ENCODE measurements at regions of chr11 and their contacts with region 1.

Region 1: GRCh38 chr11:62427630-62428233 is 8.9 kb downstream of the SCGB1A1 start:
- H3K4me3 ChIP-seq: no peak overlapping the region
- H3K27ac ChIP-seq: no peak overlapping the region
- H3K4me1 ChIP-seq: no peaks in the 10 kb centered on the region; the same call in 1 of the 2 replicates
- CTCF ChIP-seq: no peak

Region 2: GRCh38 chr11:62394825-62395538 is 32.8 kb before region 1 on chr11:
- CTCF ChIA-PET with region 1: interaction called, 36 read pairs
- POLR2A ChIA-PET with region 1: interaction called, 4 read pairs
- H3K4me3 ChIP-seq: no peak overlapping the region
- H3K27ac ChIP-seq: no peak overlapping the region
- H3K4me1 ChIP-seq: no peaks in the 10 kb centered on the region
- CTCF ChIP-seq: no peak

Region 3: DNA sequence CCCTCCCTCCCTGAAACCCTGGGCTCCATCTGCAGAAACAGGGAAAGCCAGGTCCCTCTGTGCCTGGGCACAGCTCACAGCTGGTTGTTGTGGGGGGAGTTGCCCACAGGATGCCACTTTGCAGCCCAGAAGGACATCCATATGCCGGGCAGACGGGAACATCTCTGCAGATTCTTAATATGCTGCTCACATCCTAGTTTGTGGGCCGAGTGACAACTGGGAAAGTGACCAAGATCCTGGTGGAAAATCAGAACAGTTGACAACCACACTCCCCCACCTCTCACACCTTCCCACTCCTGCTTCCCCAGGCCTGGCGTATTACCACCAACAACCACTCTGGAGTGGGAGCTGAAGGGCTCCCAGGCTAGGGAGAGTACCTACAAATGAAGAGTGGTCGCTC is 16.2 kb before region 1 on chr11:
- CTCF ChIA-PET with region 1: interaction called, 13 read pairs
- POLR2A ChIA-PET with region 1: no interaction called
- H3K4me3 ChIP-seq: no peak overlapping the region
- H3K27ac ChIP-seq: no peak overlapping the region
- H3K4me1 ChIP-seq: no peaks in the 10 kb centered on the region
- CTCF ChIP-seq: no peak

Region 4: DNA sequence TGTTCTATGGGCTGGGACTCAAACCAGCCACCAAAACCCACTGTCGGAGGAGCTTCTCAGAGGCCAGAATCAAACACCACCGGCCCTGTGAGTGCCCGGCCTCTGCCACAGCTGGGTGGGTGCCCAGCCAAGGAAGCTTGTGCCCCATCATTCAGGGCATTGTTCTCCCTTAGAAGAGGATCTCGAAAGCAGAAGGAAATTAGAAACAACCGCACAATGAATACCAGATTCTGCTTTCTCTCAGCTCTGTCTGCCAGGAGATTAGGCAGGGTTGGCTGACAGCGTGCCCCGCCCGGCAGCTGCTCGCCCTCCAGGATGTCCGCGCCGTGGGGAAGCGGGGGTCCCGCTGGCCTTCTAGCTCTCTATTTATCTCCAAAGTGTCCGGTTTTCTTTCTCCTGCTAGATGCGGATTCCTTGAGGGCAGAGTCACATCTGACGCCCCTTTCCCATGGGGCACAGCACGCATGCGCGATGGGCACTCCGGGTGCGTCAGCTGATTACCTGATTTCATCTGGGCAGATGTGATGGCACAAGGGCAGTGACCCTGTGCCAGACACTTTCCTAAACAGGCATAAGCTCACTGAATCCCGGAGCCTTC is 16.6 kb after region 1 on chr11:
- CTCF ChIA-PET with region 1: interaction called, 20 read pairs
- POLR2A ChIA-PET with region 1: interaction called, 3 read pairs
- H3K4me3 ChIP-seq: no peak overlapping the region
- H3K27ac ChIP-seq: no peak overlapping the region
- H3K4me1 ChIP-seq: no peaks in the 10 kb centered on the region
- CTCF ChIP-seq: no peak

Region 5: DNA sequence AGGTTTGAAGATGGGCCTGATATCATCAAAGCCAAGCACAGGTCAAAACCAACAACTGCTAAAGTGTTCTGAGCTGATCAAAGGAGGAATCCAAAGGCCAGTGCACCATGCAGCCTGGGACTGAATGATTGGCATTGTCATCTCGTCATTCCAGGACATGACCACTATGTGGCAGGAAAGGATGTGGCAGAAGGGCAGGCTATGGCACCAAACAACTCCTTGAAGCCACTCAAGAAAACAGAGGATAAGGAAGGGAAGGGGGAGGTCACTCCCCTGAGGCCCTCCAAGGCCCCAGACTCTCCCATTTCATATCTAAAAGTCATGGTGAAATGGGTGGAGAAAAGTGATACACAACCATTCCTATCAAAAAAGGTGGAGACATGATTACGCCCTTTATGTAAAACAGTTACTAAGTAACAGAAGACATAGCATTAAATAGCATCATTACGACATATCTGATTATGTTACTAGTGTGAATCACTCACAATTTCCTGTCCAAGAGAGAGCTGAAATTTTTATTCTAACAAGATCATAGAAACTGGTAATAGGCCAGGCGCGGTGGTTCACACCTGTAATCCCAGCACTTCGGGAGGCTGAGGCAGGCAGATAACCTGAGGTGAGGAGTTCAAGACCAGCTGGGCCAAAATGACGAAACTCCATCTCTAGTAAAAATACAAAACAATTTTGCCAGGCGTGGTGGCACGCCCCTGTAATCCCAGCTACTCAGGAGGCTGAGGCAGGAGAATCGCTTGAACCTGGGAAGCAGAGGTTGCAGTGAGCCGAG is 69.6 kb after region 1 on chr11:
- CTCF ChIA-PET with region 1: interaction called, 17 read pairs
- POLR2A ChIA-PET with region 1: interaction called, 4 read pairs
- H3K4me3 ChIP-seq: no peak overlapping the region
- H3K27ac ChIP-seq: no peak overlapping the region
- H3K4me1 ChIP-seq: no peaks in the 10 kb centered on the region
- CTCF ChIP-seq: peak; percentile 41; the same call in 1 of the 2 replicates

Region 6: GRCh38 chr11:62573592-62574362 is 146.0 kb after region 1 on chr11 and contains the start of gene EEF1G:
- CTCF ChIA-PET with region 1: interaction called, 6 read pairs
- POLR2A ChIA-PET with region 1: interaction called, 13 read pairs
- H3K4me3 ChIP-seq: peak within 1 kb of the TSS; percentile 90
- H3K27ac ChIP-seq: peak within 1 kb of the TSS; percentile 99
- H3K4me1 ChIP-seq: no peaks in the 10 kb centered on the region
- CTCF ChIP-seq: no peak